ENCODE measurements at regions of chrX and their contacts with region 1.

Region 1: GRCh38 chrX:136268051-136269048 is 17.1 kb upstream of the MAP7D3 start:
- DNase-seq: peak; percentile 55
- H3K4me3 Mint-ChIP-seq: no peak overlapping the region
- H3K27ac Mint-ChIP-seq: no peak overlapping the region
- H3K4me1 Mint-ChIP-seq: peaks cover 7% of the 10 kb centered on the region
- H3K27me3 Mint-ChIP-seq: peaks cover 16% of the 10 kb centered on the region
- CTCF ChIP-seq: peak; percentile 67

Region 2: GRCh38 chrX:136168929-136169735 is 99.2 kb before region 1 on chrX:
- CTCF ChIA-PET with region 1: interaction called, 8 read pairs
- POLR2A ChIA-PET with region 1: no interaction called
- intact Hi-C with region 1: loop called (anchors 1 kb)
- DNase-seq: peak; percentile 56
- H3K4me3 Mint-ChIP-seq: no peak overlapping the region
- H3K27ac Mint-ChIP-seq: no peak overlapping the region
- H3K4me1 Mint-ChIP-seq: peaks cover 16% of the 10 kb centered on the region
- H3K27me3 Mint-ChIP-seq: peaks cover 56% of the 10 kb centered on the region
- CTCF ChIP-seq: no peak

Region 3: DNA sequence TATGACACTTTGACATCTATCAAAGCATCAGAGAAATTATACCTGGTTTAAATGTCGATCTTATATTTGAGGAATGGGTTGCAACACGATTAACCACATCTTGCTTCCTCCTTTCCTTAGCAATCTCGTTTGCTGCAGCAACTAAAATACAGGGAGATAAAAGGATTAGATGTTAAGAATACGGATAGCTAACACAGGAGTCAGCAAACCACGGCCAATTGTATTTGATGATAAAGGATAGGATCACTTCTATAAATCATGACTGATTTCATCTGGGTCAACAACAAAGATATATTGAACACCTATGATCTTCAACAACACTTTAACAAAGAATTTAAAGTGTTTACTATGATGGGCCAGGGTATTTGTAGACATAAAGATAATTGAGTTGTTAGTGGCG is 22.1 kb before region 1 on chrX:
- CTCF ChIA-PET with region 1: interaction called, 19 read pairs
- POLR2A ChIA-PET with region 1: no interaction called
- intact Hi-C with region 1: no loop called
- DNase-seq: no peak
- H3K4me3 Mint-ChIP-seq: no peak overlapping the region
- H3K27ac Mint-ChIP-seq: no peak overlapping the region
- H3K4me1 Mint-ChIP-seq: no peaks in the 10 kb centered on the region
- H3K27me3 Mint-ChIP-seq: peaks cover 60% of the 10 kb centered on the region
- CTCF ChIP-seq: no peak

Region 4: GRCh38 chrX:136255541-136255940 is 12.8 kb before region 1 on chrX:
- CTCF ChIA-PET with region 1: interaction called, 16 read pairs
- POLR2A ChIA-PET with region 1: no interaction called
- intact Hi-C with region 1: no loop called
- DNase-seq: no peak
- H3K4me3 Mint-ChIP-seq: no peak overlapping the region
- H3K27ac Mint-ChIP-seq: no peak overlapping the region
- H3K4me1 Mint-ChIP-seq: peaks cover 8% of the 10 kb centered on the region
- H3K27me3 Mint-ChIP-seq: peaks cover 43% of the 10 kb centered on the region
- CTCF ChIP-seq: no peak

Region 5: GRCh38 chrX:136353519-136354095 is 85.3 kb after region 1 on chrX:
- CTCF ChIA-PET with region 1: interaction called, 14 read pairs
- POLR2A ChIA-PET with region 1: interaction called, 3 read pairs
- intact Hi-C with region 1: no loop called
- DNase-seq: peak; percentile 94
- H3K4me3 Mint-ChIP-seq: no peak overlapping the region
- H3K27ac Mint-ChIP-seq: peak overlapping the region; percentile 59
- H3K4me1 Mint-ChIP-seq: peaks cover 11% of the 10 kb centered on the region
- H3K27me3 Mint-ChIP-seq: peaks cover 14% of the 10 kb centered on the region
- CTCF ChIP-seq: no peak

Region 6: DNA sequence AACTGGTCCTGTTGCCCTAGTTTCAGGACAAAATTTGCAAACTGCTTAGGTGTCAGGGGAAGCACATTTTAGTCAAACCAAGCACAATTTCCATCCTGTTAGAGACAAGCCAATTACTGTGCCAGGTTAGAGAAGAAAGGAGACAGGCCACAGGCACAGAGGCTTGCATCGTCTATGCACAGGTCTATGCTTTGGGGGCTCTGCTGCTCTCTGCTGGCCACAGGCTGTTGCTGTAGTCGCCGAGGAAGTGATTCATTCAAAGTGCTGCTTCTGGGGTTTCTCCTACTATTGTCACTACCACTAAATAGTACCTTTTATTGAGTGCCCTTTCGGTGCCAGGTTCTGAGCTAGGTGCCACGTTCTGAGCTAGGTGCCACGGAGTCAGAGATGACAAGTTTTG is 309.2 kb after region 1 on chrX:
- CTCF ChIA-PET with region 1: interaction called, 5 read pairs
- POLR2A ChIA-PET with region 1: no interaction called
- intact Hi-C with region 1: loop called (anchors 5 kb)
- DNase-seq: peak; percentile 51
- H3K4me3 Mint-ChIP-seq: no peak overlapping the region
- H3K27ac Mint-ChIP-seq: no peak overlapping the region
- H3K4me1 Mint-ChIP-seq: no peaks in the 10 kb centered on the region
- H3K27me3 Mint-ChIP-seq: peaks cover 35% of the 10 kb centered on the region
- CTCF ChIP-seq: peak; percentile 56

Region 7: GRCh38 chrX:136643243-136643642 is 374.9 kb after region 1 on chrX:
- CTCF ChIA-PET with region 1: no interaction called
- POLR2A ChIA-PET with region 1: no interaction called
- intact Hi-C with region 1: no loop called
- DNase-seq: no peak
- H3K4me3 Mint-ChIP-seq: no peak overlapping the region
- H3K27ac Mint-ChIP-seq: no peak overlapping the region
- H3K4me1 Mint-ChIP-seq: no peaks in the 10 kb centered on the region
- H3K27me3 Mint-ChIP-seq: peaks cover 68% of the 10 kb centered on the region
- CTCF ChIP-seq: no peak

Measured in MCF 10A (cell line).